ENCODE measurements at regions of chr3 and their contacts with region 1.

Region 1: DNA sequence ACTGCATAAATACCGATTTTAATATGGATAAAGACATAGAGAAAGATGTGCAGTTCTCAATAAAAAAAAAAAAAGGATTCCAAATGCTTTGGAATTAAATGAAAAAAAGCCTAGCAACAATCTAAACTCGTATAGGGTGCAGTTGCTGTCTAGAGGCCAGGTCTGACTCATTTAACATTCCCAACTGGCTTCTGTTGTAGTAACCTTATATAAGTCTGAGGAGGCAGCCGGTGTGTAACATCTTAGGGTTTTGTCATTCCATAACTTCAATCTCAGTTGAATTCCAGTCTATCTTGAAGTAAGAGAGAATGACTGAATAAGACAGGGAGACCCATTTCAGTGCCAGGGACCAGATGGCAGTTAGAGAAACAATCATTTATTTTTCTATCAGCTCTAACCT is 6.5 kb downstream of the PDCD10 start:
- DNase-seq: peak; percentile 26
- ATAC-seq: peak; percentile 68
- H3K4me3 ChIP-seq: no peak overlapping the region
- H3K27ac ChIP-seq: no peak overlapping the region
- H3K4me1 ChIP-seq: peaks cover 21% of the 10 kb centered on the region
- H3K27me3 ChIP-seq: no peaks in the 10 kb centered on the region
- CTCF ChIP-seq: no peak

Region 2: DNA sequence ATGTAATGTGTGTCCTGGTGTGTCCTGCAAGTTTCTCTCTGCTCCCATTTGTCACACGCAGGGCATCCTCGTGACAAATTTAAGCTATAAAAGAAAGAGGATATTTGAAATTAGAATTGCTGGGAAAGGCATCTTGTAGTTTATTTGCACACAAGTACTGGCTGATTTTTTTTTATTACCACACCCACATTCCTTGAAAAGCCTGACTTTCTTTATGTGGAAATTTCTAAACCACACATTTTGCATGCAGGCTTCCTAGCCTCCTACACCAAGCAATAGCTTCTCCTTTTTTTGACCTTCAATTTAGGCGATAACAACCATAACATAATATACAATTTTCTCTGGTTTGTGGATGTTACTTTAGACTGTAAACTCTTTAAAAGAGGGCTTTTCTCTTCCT is 133.5 kb after region 1 on chr3:
- CTCF ChIA-PET with region 1: no interaction called
- POLR2A ChIA-PET with region 1: no interaction called
- intact Hi-C with region 1: no loop called
- DNase-seq: peak; percentile 76
- ATAC-seq: peak; percentile 79
- H3K4me3 ChIP-seq: peak overlapping the region; percentile 50
- H3K27ac ChIP-seq: peak overlapping the region; percentile 90
- H3K4me1 ChIP-seq: peaks cover 30% of the 10 kb centered on the region
- H3K27me3 ChIP-seq: no peaks in the 10 kb centered on the region
- CTCF ChIP-seq: no peak

Region 3: DNA sequence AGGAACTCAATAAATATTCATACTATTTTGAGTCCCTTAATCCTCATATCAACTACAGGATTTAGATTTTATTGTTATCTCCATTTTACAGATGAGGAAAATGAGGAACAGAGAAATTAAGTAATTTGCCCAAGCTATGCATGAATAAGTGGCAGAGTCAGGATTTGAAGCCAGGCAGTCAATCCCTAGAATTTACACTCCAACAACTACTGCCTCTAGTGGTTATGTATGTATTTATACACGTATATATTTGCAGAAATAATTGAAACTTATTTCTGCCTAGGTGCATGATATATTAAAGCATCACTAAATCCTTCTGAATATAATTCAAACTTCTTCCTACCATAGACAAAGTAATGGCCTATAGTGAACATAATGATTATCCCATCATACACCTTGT is 144.8 kb after region 1 on chr3:
- CTCF ChIA-PET with region 1: no interaction called
- POLR2A ChIA-PET with region 1: interaction called, 10 read pairs
- intact Hi-C with region 1: no loop called
- DNase-seq: peak; percentile 33
- ATAC-seq: no peak; the same call in 1 of the 2 replicates
- H3K4me3 ChIP-seq: no peak overlapping the region
- H3K27ac ChIP-seq: no peak overlapping the region
- H3K4me1 ChIP-seq: peaks cover 8% of the 10 kb centered on the region; the same call in 1 of the 2 replicates
- H3K27me3 ChIP-seq: no peaks in the 10 kb centered on the region
- CTCF ChIP-seq: peak; percentile 69

Region 4: GRCh38 chr3:168061332-168061996 is 333.3 kb after region 1 on chr3:
- CTCF ChIA-PET with region 1: no interaction called
- POLR2A ChIA-PET with region 1: no interaction called
- intact Hi-C with region 1: no loop called
- DNase-seq: peak; percentile 28
- ATAC-seq: peak; percentile 91
- H3K4me3 ChIP-seq: 0 out of 2 replicates have a peak overlapping the region, but pooled peaks have one; percentile 3
- H3K27ac ChIP-seq: no peak overlapping the region
- H3K4me1 ChIP-seq: peaks cover 7% of the 10 kb centered on the region; the same call in 1 of the 2 replicates
- H3K27me3 ChIP-seq: no peaks in the 10 kb centered on the region
- CTCF ChIP-seq: peak; percentile 51

Measured in PC-3 (cell line).